Body of pancreas (tissue), 4 donors: ENCODE measurements at regions of chr2 and their contacts with region 1.

Region 1: DNA sequence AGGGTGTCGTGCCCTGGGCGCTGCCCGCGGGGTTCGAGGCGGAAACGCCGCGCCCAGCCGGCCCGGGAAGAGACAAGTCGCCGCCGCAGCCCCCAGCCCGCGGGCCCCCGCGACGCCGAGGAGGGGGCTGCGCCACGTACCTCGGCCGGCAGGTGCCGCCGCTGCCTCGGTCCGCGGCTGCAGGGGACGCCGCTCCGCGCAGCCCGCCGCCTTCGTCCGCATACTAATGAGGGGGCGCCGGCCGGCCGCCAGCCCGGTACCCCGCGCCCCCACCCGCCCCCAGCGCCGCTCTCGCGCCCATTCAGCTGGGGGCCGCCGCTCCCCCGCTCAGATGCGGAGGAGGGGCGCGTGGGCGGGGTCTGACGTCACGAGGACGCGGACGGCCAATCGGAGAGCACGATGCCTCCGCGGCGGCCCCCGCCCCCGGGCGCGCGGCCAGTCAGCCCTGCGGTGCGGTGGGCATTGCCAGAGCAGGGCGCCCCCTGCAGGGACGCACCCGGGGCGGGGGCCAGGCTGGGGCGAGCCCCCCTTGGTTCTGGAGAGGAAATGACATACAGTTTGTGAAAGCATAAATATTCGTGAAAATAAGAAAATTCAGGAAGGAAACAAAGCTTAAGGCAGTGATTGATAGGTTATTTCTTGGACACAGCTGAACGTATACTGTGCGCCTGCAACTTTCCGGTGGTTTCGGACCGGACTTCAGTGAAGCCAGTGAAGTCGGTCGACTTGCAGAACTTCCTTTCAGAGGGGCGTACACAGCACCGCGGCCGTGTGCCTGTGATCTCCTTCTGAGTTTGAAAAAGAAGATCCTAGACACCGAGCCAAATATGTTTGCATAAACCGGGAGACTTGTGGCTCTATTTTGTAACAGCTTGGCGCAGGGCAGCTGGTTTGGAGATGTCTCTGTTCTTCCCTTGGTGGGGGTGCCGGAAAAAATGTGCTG is at the start of gene ST3GAL5:
- DNase-seq: peak; percentile 87 to 93 (median 89)
- ATAC-seq: peak; percentile 86
- H3K4me3 ChIP-seq: peak within 1 kb of the TSS; percentile 53 to 57
- H3K27ac ChIP-seq: peak within 1 kb of the TSS; percentile 43 to 81 (median 78)
- H3K4me1 ChIP-seq: peaks cover 26% of the 10 kb centered on the region
- H3K27me3 ChIP-seq: no peaks in the 10 kb centered on the region
- CTCF ChIP-seq: peak; percentile 27 to 83 (median 80)
- POLR2A ChIP-seq: peak; percentile 35 to 84 (median 80)
- total RNA-seq, gene ST3GAL5: 8.6 to 18.8 TPM

Region 2: DNA sequence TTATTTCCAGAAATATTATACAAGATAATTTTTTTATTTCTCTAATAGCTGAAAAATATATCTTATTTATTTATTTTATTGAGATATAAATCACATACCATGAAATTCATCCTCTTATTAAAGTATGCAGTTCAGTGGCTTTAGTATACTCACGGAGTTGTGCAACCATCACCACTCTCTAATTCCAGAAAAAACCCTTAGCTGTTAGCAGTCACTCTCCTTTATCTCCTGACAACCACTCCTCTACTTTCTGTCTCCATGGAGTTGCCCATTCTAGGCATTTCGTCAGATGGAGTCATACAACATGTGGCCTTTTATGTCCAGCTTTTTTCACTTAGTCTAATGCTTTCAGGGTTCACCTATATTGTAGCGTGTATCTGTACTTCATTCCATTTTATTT is 689.3 kb before region 1 on chr2:
- intact Hi-C with region 1: no loop called
- DNase-seq: no peak
- ATAC-seq: no peak
- H3K4me3 ChIP-seq: no peak overlapping the region
- H3K27ac ChIP-seq: no peak overlapping the region
- H3K4me1 ChIP-seq: no peaks in the 10 kb centered on the region
- H3K27me3 ChIP-seq: no peaks in the 10 kb centered on the region
- CTCF ChIP-seq: no peak
- POLR2A ChIP-seq: no peak

Region 3: DNA sequence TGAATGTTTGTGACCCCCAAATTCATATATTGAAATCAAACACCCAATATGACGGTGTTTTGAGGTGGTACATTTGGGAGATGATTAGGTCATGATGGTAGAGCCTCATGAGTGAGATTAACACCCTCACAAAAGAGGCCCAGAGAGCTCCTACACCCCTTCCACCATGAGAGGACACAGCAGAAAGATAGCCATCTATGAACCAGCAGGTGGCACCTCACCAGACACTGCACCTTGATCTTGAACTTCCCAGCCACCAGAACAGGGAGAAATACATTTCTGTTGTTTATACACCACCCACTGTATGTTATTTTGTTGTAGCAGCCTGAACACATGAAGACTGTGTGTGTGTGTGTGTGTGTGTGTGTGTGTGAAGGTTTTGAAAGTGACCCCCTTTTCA is 58.3 kb before region 1 on chr2:
- intact Hi-C with region 1: loop called (anchors 10 kb)
- DNase-seq: no peak
- ATAC-seq: no peak
- H3K4me3 ChIP-seq: no peak overlapping the region
- H3K27ac ChIP-seq: no peak overlapping the region
- H3K4me1 ChIP-seq: peaks cover 4% of the 10 kb centered on the region
- H3K27me3 ChIP-seq: no peaks in the 10 kb centered on the region
- CTCF ChIP-seq: no peak
- POLR2A ChIP-seq: no peak

Region 4: DNA sequence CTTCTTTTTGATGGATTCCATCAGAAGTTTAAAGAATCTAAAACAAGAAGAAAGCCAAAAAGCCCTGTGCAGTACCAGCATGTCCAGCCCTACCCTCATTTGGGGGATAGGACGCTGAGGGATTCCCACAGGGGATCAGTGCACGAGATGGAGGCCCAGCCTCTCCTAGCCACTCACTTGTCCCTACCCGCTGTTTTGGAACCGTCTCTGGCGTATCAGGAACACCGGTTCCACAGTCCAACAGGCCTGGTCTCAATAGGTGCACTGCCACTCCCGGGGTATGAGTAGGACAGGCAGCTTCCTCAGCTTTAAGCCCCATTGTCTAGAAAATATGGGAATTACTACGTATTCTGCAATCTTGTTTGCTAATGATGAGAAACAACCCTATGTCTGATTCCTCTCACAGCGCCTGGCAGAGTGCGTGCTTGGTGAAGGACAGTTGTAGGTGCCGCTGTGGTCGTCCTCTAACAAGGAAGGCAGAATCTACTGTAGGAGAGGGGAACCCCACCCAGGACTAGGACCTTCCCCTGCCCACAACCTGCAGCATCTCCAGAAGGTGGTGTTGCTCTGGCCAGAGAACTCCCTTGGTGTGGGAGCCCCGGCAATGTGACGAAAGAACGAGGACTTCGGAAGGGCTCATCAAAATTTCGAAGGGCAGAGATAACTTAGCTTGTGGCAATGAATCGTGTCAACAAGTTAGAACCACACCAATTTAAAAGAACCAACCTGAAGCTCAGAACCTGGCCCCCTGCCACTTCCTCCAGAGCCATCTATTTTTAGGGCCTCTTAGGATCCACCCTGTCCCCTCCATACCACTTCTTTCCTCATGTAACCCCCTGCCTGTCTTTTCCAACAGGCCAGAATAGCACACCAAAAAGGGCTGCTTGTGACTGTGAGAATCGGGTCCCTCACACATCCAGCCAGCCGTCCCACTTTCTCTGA is 145.1 kb after region 1 on chr2:
- intact Hi-C with region 1: loop called (anchors 5 kb)
- DNase-seq: no peak
- ATAC-seq: no peak
- H3K4me3 ChIP-seq: no peak overlapping the region
- H3K27ac ChIP-seq: no peak overlapping the region
- H3K4me1 ChIP-seq: peaks cover 38% of the 10 kb centered on the region
- H3K27me3 ChIP-seq: no peaks in the 10 kb centered on the region
- CTCF ChIP-seq: no peak
- POLR2A ChIP-seq: no peak

Region 5: DNA sequence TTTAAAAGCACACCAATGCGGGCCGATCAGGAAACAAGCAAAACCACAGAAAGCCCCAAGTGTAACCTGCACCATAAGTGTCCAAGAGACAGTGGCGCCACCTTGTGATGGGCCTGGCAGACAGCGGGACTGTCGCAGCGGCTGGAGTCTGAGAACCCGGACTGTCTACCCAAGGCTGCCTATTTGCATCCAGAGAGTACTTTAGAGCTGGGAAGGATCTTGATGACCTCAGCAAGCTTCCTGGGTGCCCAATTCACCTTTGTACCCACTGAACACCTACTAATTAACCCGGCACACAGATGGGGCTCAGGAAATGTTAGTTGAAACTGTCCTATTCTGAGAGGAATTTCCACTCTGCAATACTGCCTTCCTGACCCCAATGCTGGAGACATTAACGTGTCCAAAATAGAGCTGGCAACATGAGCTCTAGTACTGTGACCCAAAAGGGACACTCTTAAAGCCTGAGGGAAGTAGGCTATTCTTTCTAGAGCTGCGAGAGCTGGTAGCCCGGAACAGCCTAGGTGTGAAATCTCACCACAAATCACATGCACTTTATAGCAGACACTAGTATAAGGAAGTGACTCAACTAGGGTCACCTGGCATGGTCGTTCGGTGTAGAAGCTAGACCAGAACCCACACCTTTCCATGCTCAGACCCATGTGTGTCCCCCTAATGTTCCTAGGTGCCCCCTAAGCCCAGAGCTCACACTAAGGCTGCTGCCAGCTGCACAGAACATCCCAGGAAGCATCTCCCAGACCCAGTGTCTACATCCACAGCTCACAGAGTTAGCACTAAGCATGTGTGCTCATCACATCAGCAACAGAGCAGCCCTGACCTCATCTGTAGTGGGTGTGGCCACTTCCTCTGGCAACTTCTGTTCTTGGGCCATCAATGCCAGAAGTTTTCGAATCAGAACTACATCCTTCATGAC is 191.3 kb after region 1 on chr2:
- intact Hi-C with region 1: loop called (anchors 10 kb)
- DNase-seq: peak; percentile 84 to 91 (median 86)
- ATAC-seq: peak; percentile 81
- H3K4me3 ChIP-seq: no peak overlapping the region
- H3K27ac ChIP-seq: no peak overlapping the region
- H3K4me1 ChIP-seq: no peaks in the 10 kb centered on the region
- H3K27me3 ChIP-seq: no peaks in the 10 kb centered on the region
- CTCF ChIP-seq: peak; percentile 58 to 86 (median 76)
- POLR2A ChIP-seq: no peak